ENCODE measurements at regions of chr7 and their contacts with region 1.

Region 1: DNA sequence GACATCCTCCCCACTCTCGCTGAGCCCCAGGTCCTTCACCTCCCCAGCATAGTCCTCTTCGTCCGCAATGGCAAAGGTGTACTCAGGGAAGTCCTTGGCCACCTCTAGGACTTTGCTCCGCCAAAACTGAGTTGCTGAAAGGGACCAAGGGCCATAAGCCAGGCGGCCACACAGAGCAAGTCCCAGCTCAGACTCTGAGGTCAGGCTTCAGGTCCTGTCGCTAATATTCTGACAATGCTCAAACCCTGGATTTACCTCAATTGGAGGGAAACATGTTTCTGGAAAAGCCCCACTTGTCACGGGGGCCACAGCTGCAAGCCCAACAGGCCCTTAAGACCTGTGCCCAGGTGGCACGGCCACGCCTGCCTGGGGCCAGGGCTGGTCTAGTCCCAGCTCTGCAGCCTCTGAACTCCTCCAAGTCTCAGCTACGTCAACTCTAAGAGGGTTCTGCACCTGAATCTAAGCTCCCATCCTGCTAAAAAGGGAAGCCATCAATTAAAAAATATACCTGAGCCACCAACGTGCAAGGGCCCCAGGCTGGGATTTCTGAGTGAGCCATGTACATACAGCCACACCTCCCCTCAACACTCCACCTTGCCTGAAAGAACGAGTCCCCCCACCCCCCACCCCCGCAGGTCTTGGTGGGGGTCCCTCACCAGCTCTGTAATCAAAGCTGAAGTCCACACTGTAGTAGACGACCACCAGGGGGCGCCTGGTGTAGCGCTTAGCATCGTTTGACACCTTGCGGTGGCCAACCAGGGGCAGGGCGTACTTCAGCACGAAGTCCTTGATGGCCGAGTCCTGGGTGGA is 22.9 kb downstream of the PDIA4 start:
- DNase-seq: peak; percentile 65
- H3K4me3 Mint-ChIP-seq: no peak overlapping the region
- H3K27ac Mint-ChIP-seq: no peak overlapping the region
- H3K4me1 Mint-ChIP-seq: no peaks in the 10 kb centered on the region
- H3K27me3 Mint-ChIP-seq: no peaks in the 10 kb centered on the region

Region 2: GRCh38 chr7:149090397-149091195 is 85.2 kb after region 1 on chr7 and contains the start of gene ZNF786:
- intact Hi-C with region 1: loop called (anchors 1 kb)
- DNase-seq: peak; percentile 87
- H3K4me3 Mint-ChIP-seq: peak within 1 kb of the TSS; percentile 99
- H3K27ac Mint-ChIP-seq: peak within 1 kb of the TSS; percentile 100
- H3K4me1 Mint-ChIP-seq: peaks cover 17% of the 10 kb centered on the region
- H3K27me3 Mint-ChIP-seq: peaks cover 2% of the 10 kb centered on the region
- total RNA-seq, gene ZNF786: 9.9 and 10.9 TPM in 2 replicates

Region 3: DNA sequence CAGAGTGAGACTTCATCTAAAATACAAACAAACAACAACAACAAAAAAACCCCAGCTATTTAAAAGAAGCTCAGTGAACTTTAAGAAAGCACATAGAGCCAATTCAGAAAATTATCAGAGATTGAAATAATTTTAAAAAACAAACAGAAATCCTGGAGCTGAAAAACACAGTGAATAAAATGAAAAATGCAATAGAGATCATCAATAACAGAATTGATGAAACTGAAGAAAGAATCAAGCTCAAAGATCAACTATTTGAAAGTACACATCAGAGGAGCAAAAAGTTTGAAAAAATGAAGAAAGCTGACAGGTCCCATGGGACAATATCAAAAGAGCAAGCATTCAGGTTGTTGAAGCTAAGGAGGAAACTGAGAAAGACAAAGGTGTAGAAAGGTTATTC is 504.3 kb after region 1 on chr7:
- intact Hi-C with region 1: no loop called
- DNase-seq: no peak
- H3K4me3 Mint-ChIP-seq: no peak overlapping the region
- H3K27ac Mint-ChIP-seq: no peak overlapping the region
- H3K4me1 Mint-ChIP-seq: no peaks in the 10 kb centered on the region
- H3K27me3 Mint-ChIP-seq: peaks cover 6% of the 10 kb centered on the region

Measured in activated T-helper 1 cell treated with anti-CD3 and anti-CD28 coated beads, Interleukin-12 subunit alpha, Interleukin-12 subunit beta, Interleukin-2, Interleukin-4 antibody, amounts not matched to agents 30 ng/mL and 10 ng/mL and 1 ng/mL, durations not matched to agents 14 hours and 24 hours and 36 hours (primary cell).